ENCODE measurements at regions of chr7 and their contacts with region 1.

Region 1: GRCh38 chr7:85736085-85736484 is 549.2 kb upstream of the SEMA3D start:
- DNase-seq: no peak
- H3K4me3 ChIP-seq: no peak overlapping the region
- H3K27me3 ChIP-seq: no peaks in the 10 kb centered on the region
- CTCF ChIP-seq: no peak

Region 2: GRCh38 chr7:85750454-85750949 is 14.4 kb after region 1 on chr7:
- CTCF ChIA-PET with region 1: interaction called, 16 read pairs
- POLR2A ChIA-PET with region 1: no interaction called
- DNase-seq: no peak
- H3K4me3 ChIP-seq: no peak overlapping the region
- H3K27me3 ChIP-seq: peaks cover 1% of the 10 kb centered on the region; the same call in 1 of the 2 replicates
- CTCF ChIP-seq: peak; percentile 80

Region 3: GRCh38 chr7:85773116-85773728 is 37.1 kb after region 1 on chr7:
- CTCF ChIA-PET with region 1: no interaction called
- POLR2A ChIA-PET with region 1: no interaction called
- DNase-seq: peak; percentile 35
- H3K4me3 ChIP-seq: no peak overlapping the region
- H3K27me3 ChIP-seq: no peaks in the 10 kb centered on the region
- CTCF ChIP-seq: no peak

Measured in BJ (cell line).